ENCODE measurements at regions of chr18 and their contacts with region 1.

Region 1: DNA sequence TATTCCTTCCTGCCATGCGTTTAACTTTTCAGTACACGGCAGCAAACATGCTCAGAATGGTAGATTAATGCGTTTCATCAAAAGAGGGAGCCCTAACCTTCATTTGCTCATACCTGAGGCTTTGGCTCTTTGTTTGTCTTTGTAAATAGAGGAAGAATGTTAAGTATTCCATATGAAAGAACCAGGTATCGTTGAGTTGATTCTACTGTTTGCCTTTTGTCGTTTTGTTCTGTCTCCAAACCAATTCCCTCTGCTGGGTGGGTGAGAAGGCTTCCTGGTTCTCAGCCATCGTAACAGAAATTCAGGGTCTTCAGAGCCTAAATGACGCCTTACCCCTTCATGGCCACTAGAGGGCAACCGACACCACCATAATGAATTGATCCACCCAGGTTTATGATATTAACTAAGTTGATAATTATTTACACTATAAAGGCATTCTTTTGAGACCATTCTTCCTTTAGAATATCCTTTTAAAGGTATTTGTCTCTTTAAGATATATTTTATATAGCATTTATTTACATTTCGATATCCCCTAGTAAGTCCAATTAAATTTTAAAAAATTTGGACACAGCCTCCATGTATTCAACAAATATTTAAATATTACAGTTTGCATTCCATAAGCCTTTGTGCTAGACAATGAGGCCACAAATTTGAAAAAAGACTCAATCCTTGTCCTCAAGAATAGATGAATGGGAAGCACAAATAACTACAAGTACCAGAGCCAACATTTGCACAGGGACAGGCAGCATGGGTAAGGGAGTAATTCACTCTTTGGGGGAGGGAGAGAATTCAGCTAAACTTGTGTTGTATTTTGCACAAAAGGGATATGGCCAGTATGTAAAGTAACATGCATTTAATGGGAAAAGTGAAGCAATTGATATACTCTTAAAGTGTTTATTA is 48.1 kb downstream of the TIMM21 start:
- DNase-seq: peak; percentile 34
- H3K4me3 ChIP-seq: no peak overlapping the region
- H3K27ac ChIP-seq: no peak overlapping the region
- H3K4me1 ChIP-seq: no peaks in the 10 kb centered on the region
- H3K27me3 ChIP-seq: no peaks in the 10 kb centered on the region
- CTCF ChIP-seq: peak; percentile 89

Region 2: GRCh38 chr18:74050807-74051206 is 145.7 kb before region 1 on chr18:
- intact Hi-C with region 1: no loop called
- DNase-seq: no peak
- H3K4me3 ChIP-seq: no peak overlapping the region
- H3K27ac ChIP-seq: no peak overlapping the region
- H3K4me1 ChIP-seq: no peaks in the 10 kb centered on the region
- H3K27me3 ChIP-seq: no peaks in the 10 kb centered on the region
- CTCF ChIP-seq: no peak

Region 3: DNA sequence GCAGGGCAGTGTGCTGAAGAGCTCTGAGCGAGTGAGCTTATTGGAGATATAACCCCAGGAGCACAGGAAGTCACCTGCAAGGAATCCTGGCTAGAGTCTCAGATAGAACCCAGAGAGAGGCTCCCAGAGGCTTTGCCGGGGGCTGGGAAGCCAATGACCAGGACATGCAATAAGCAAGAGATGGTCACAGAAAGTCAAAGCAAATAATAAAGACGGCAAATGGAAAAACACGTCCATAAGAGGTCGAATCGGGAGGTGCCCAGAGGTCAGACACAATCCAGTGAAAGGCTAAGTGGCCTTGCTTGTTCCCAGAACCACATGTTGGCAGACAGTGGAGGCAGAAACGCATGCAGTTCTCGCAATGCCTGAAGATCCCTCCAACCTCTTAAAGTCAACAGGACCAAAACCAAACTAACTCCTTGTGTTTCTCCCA is 92.2 kb after region 1 on chr18:
- intact Hi-C with region 1: loop called (anchors 5 kb)
- DNase-seq: no peak
- H3K4me3 ChIP-seq: no peak overlapping the region
- H3K27ac ChIP-seq: peak overlapping the region; percentile 1
- H3K4me1 ChIP-seq: no peaks in the 10 kb centered on the region
- H3K27me3 ChIP-seq: no peaks in the 10 kb centered on the region
- CTCF ChIP-seq: no peak

Region 4: DNA sequence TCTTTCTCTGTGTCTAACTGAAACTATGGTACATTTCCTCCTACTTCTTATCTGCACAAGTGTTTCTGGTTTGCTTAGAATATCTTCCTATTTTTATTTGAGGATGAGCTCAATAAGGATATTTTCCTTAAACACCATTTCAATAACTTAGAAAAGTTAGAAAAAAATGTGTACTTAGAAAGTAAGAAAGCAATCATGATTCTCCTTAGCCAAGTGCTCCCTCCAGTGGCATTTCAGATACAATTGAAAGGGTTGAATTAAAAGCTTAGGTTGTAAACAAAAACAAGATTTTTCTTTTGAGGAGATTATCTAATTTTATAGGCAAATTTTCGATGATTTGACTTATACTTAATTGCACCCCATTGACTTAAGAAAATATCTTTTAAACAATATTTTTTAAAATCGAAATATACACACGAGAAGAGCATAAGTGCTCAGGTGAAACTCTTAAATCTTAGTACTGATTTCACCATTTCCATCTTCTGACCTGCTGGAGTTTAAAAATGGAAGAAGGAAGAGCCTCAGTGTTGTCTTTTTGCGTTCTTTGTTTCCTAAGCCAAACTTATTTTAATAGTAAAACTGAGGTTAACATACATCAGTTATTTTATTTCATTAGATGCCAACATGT is 146.1 kb after region 1 on chr18:
- intact Hi-C with region 1: loop called (anchors 2 kb)
- DNase-seq: peak; percentile 53
- H3K4me3 ChIP-seq: no peak overlapping the region
- H3K27ac ChIP-seq: no peak overlapping the region
- H3K4me1 ChIP-seq: no peaks in the 10 kb centered on the region
- H3K27me3 ChIP-seq: no peaks in the 10 kb centered on the region
- CTCF ChIP-seq: peak; percentile 55

Region 5: DNA sequence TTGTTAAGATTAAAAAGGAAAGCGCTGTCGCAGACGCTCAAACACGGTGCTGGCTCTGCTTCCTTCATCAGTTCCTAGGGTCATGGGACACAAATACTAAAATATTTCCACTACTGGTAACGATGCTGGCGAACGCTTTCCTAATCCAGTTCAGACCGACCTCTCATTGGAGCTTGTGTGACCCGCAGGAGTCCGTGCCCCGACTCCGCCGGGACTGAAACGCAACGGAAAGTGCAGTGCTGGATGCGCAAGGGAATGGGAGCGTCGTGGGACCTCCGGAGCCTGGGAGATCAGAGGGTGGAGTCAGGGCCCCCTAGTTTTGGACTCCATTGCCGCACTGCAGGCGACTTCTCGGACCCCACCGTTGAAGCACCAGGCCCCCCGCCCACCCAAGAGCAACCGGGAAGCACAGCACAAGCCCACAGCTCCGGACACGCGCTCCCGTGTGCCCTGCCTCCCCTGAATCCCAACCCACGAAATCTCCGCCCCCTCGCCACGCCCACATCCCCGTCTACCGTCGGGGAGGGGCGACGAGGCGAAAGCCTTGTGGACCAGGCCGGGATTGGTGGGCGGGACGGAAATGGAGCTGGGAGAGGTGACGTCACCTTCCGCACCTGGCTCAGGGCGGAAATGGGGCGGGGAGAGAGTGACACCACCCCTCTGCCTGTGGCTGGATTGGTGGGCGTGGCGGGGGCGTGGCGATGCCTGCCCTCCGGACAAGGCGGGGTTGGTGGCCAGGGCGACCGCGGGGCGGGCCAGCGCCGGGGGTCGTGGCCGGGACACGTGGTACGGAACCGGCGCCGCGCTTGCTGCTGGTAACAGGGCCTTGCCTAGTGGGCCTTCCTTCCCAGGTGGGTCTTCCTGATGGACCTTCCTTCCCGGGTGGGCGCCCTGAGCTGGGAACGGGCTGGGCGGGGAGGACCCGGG is 299.4 kb after region 1 on chr18 and contains the start of gene CNDP2:
- intact Hi-C with region 1: loop called (anchors 10 kb)
- DNase-seq: peak; percentile 100
- H3K4me3 ChIP-seq: peak within 1 kb of the TSS; percentile 96
- H3K27ac ChIP-seq: peak within 1 kb of the TSS; percentile 91
- H3K4me1 ChIP-seq: peaks cover 20% of the 10 kb centered on the region
- H3K27me3 ChIP-seq: no peaks in the 10 kb centered on the region
- CTCF ChIP-seq: no peak
- total RNA-seq, gene CNDP2: 206 to 261 TPM

Region 6: DNA sequence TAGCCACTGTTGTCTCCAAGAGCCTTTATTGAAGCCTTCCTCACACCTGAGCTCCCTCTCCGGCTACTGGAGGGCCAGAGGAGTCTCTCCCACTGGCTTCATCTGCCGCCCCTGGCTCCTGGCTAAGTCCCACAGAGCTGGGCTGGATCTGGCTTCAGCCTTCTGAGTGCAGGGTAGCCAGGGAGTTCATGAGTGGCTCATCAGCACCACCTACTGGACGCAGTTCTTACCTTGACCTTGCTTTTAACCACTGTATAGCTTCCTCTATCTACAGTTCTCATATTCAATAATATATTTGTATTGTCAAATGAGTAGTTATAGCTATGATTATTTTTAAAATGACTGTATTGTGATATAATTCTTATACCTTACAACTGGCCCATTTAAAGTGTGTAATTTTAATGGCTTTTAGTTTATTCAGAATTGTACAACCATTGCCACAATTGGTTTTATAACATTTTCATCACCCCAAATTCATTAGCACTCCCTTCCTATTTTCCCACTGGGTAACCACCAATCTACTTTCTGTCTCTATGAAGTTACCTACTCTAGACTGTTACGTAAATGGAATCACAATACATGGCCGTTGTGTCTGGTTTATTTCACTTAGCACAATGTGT is 355.6 kb after region 1 on chr18:
- intact Hi-C with region 1: loop called (anchors 10 kb)
- DNase-seq: peak; percentile 90
- H3K4me3 ChIP-seq: no peak overlapping the region
- H3K27ac ChIP-seq: no peak overlapping the region
- H3K4me1 ChIP-seq: no peaks in the 10 kb centered on the region
- H3K27me3 ChIP-seq: no peaks in the 10 kb centered on the region
- CTCF ChIP-seq: peak; percentile 79

Region 7: GRCh38 chr18:74589021-74589420 is 392.6 kb after region 1 on chr18:
- intact Hi-C with region 1: no loop called
- DNase-seq: no peak
- H3K4me3 ChIP-seq: no peak overlapping the region
- H3K27ac ChIP-seq: no peak overlapping the region
- H3K4me1 ChIP-seq: no peaks in the 10 kb centered on the region
- H3K27me3 ChIP-seq: no peaks in the 10 kb centered on the region
- CTCF ChIP-seq: no peak

Measured in colonic mucosa (tissue), 4 donors.